ENCODE measurements at regions of chr18 and their contacts with region 1.

Region 1: GRCh38 chr18:5073026-5073944 is 123.8 kb downstream of the AKAIN1 start:
- DNase-seq: peak; percentile 4
- H3K4me3 ChIP-seq: no peak overlapping the region
- H3K27ac ChIP-seq: no peak overlapping the region
- H3K4me1 ChIP-seq: no peaks in the 10 kb centered on the region
- H3K27me3 ChIP-seq: no peaks in the 10 kb centered on the region
- CTCF ChIP-seq: peak; percentile 34 to 54

Region 2: DNA sequence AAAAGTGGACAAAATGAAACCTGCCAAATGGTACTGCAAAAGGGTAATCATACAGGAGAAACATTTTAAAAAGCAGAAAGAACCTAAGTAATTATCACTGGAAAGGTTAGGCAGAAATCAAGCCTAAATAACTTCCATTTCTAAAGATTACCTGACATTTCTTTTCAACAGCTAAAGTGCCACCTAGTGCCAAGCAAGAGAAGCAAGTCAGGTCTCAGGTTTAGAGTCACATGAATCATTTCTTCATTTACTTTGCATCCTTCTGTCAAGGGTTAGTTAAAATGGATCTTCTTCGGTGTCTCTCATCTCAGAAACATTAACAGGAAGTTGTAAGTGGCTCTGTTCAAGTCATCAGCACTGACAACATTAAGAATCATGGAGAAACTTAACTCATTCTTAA is 33.4 kb after region 1 on chr18:
- CTCF ChIA-PET with region 1: no interaction called
- dilution Hi-C with region 1: no loop called
- in situ Hi-C with region 1: no loop called
- intact Hi-C with region 1: loop called (anchors 1 kb)
- DNase-seq: no peak
- H3K4me3 ChIP-seq: no peak overlapping the region
- H3K27ac ChIP-seq: no peak overlapping the region
- H3K4me1 ChIP-seq: no peaks in the 10 kb centered on the region
- H3K27me3 ChIP-seq: no peaks in the 10 kb centered on the region
- CTCF ChIP-seq: peak in 1 of 2 donors; percentile 39